PC-3 (cell line): ENCODE measurements at regions of chr7 and their contacts with region 1.

Region 1: DNA sequence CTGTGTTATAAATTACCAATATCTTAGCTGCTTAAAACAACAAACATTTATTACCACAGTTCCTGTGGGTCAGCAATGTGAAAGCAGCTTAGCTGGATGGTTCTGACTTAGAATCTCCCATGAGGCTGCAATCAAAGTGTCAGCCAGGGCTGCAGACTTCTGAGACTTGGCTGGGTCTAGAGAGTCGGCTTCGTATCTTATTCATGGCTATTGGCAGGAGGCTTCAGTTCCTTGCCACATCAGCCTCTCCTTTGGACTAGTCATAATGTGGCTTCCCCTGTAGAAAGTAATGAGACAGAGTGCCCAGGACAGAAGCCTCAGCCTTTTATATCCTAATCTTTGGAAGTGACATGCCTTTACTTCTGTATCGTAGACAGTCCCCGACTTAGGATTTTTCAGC is 27.3 kb downstream of the RALA start:
- DNase-seq: no peak
- ATAC-seq: no peak
- H3K4me3 ChIP-seq: no peak overlapping the region
- H3K27ac ChIP-seq: no peak overlapping the region
- H3K4me1 ChIP-seq: no peaks in the 10 kb centered on the region
- H3K27me3 ChIP-seq: no peaks in the 10 kb centered on the region
- CTCF ChIP-seq: no peak

Region 2: GRCh38 chr7:39172137-39172536 is 478.5 kb before region 1 on chr7:
- CTCF ChIA-PET with region 1: no interaction called
- POLR2A ChIA-PET with region 1: no interaction called
- intact Hi-C with region 1: no loop called
- DNase-seq: peak; percentile 31
- ATAC-seq: no peak
- H3K4me3 ChIP-seq: no peak overlapping the region
- H3K27ac ChIP-seq: no peak overlapping the region
- H3K4me1 ChIP-seq: no peaks in the 10 kb centered on the region
- H3K27me3 ChIP-seq: peaks cover 13% of the 10 kb centered on the region
- CTCF ChIP-seq: no peak

Region 3: DNA sequence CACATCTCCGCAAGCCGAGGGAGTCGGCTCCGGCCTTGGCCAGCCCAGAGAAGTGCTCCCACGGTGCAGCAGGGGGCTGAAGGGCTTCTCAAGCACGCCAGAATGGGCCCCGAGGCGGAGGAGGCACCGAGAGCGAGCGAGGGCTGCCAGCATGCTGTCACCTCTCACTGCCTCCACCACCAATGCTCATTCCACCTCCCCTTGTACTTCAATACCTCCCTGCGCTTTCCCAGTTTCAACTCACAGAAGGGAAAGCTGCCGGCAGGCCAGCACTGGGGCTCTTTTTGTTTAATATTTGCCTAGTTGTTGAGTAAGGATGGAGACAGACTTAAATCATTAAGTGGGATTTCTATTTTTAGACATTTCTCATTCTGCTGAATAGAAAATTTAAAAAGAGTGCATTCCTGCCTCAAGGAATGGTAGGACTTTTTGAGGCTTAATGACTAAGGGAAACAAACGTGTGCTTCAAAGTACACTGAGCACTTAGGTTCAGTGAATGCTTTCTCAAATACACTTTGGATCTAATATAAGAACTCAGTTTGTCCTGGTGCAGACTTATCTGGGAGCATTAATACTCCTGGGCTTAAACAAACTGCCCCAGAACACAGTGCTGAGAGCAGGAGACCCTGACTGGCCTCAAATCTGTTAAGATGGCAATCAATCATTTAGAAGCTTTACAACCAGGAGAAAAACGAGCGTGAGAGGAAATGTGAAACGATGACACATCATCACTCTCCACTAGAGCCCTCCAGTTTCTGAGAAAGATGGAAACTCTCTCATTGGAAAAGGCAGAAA is 103.8 kb after region 1 on chr7:
- CTCF ChIA-PET with region 1: no interaction called
- POLR2A ChIA-PET with region 1: interaction called, 12 read pairs
- intact Hi-C with region 1: no loop called
- DNase-seq: no peak
- ATAC-seq: no peak
- H3K4me3 ChIP-seq: no peak overlapping the region
- H3K27ac ChIP-seq: no peak overlapping the region
- H3K4me1 ChIP-seq: no peaks in the 10 kb centered on the region
- H3K27me3 ChIP-seq: no peaks in the 10 kb centered on the region
- CTCF ChIP-seq: no peak